ENCODE measurements at regions of chr19 and their contacts with region 1.

Region 1: GRCh38 chr19:4065430-4066175 is 1.1 kb downstream of the ZBTB7A start:
- DNase-seq: peak; percentile 97 to 99
- ATAC-seq: peak; percentile 78 to 85 (median 83)
- H3K4me3 ChIP-seq: peak overlapping the region; percentile 87
- H3K27ac ChIP-seq: peak overlapping the region; percentile 96
- H3K4me1 ChIP-seq: peaks cover 36% of the 10 kb centered on the region
- H3K27me3 ChIP-seq: no peaks in the 10 kb centered on the region
- CTCF ChIP-seq: no peak

Region 2: GRCh38 chr19:4007021-4007835 is 58.4 kb before region 1 on chr19 and contains the start of gene PIAS4:
- intact Hi-C with region 1: loop called in 1 of 2 experiments (anchors 5 kb)
- DNase-seq: peak; percentile 97 to 98
- ATAC-seq: peak; percentile 89 to 95 (median 92)
- H3K4me3 ChIP-seq: peak within 1 kb of the TSS; percentile 87
- H3K27ac ChIP-seq: peak within 1 kb of the TSS; percentile 91
- H3K4me1 ChIP-seq: peaks cover 34% of the 10 kb centered on the region
- H3K27me3 ChIP-seq: no peaks in the 10 kb centered on the region
- CTCF ChIP-seq: no peak
- total RNA-seq, gene PIAS4: 14.6 to 27.2 (median 17.0) TPM

Region 3: DNA sequence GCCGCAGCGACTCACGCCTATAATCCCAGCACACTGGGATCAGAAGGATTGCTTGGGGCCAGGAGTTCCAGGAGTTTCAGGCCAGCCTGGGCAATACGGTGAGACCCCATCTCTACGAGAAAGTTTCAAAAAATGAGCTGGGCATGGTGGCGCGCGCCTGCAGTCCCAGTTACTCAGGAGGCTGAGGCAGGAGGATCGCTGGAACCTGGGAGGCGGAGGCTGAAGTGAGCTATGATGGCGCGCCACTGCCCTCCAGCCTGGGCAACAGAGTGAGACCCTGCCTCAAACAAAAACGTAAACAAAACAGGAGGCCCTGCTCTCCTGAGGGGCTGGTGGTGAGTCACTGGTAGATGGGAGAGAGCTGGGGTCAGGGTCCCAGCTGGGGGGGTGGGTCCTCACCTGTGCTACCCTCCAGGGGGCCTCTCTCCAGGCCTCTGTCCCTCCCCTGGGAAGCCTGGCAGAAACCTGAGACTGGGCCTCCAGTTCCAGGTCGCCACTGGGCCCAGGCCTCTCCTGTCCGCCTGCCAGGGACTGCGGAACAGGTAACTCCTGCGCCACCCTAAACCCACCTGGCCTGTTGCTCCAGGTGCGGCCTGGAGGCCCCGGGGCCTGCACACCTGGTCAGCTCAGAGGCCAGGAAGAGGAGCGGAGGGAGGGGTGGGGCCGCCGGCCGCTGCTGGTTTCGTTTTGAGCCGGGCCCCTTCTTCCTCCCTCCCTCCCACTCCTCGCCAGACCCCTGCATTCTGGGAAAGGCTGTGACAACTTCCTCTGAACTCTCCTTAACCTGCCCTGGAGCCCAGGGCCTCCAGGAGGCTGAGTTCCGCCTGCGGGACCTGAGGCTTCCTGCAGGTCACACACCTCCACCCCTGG is 18.3 kb after region 1 on chr19:
- intact Hi-C with region 1: no loop called
- DNase-seq: peak; percentile 21 to 56
- ATAC-seq: peak in 2 of 4 donors; percentile 7 to 13
- H3K4me3 ChIP-seq: peak overlapping the region; percentile 38
- H3K27ac ChIP-seq: no peak overlapping the region
- H3K4me1 ChIP-seq: no peaks in the 10 kb centered on the region
- H3K27me3 ChIP-seq: no peaks in the 10 kb centered on the region
- CTCF ChIP-seq: no peak

Region 4: DNA sequence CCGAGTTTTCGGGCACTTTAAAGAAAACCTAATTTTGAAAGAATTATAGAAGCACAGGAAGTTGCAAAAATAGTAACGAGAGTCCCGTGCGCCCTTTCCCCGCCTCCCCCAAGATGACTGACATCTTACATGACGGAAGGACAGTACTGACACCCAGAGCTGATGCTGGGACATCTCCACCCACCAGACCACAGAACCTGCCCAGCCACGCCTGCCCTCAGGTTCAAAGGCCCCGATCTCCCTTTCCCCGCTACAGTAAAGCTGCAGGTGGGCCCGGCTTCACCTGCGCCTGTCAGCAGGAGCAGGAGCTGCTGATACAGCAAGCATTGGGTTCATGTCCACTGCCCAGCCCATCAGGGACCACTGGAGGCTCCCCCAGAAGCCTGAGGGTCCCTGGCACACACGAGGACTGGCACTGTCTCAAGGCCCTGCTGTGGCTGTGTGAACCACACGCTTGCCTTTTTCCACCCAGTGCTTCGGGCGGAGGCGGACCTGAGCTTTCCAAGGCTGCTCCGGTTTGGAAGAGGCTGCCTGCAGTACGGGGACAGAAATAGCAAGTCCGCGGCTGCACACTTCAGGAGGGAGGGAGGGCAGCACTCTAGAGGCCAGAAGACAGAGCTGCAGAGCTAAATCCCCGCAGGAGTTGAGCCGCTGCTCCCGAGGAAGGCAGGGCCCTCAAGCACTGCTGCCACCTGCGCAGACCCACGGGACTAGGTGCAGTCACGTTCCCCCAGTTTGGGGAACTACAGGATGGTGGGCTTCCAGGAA is 49.6 kb after region 1 on chr19:
- intact Hi-C with region 1: loop called (anchors 5 kb)
- DNase-seq: no peak
- ATAC-seq: peak; percentile 51 to 87 (median 80)
- H3K4me3 ChIP-seq: peak overlapping the region; percentile 1
- H3K27ac ChIP-seq: peak overlapping the region; percentile 55
- H3K4me1 ChIP-seq: peaks cover 10% of the 10 kb centered on the region
- H3K27me3 ChIP-seq: no peaks in the 10 kb centered on the region
- CTCF ChIP-seq: no peak

Region 5: DNA sequence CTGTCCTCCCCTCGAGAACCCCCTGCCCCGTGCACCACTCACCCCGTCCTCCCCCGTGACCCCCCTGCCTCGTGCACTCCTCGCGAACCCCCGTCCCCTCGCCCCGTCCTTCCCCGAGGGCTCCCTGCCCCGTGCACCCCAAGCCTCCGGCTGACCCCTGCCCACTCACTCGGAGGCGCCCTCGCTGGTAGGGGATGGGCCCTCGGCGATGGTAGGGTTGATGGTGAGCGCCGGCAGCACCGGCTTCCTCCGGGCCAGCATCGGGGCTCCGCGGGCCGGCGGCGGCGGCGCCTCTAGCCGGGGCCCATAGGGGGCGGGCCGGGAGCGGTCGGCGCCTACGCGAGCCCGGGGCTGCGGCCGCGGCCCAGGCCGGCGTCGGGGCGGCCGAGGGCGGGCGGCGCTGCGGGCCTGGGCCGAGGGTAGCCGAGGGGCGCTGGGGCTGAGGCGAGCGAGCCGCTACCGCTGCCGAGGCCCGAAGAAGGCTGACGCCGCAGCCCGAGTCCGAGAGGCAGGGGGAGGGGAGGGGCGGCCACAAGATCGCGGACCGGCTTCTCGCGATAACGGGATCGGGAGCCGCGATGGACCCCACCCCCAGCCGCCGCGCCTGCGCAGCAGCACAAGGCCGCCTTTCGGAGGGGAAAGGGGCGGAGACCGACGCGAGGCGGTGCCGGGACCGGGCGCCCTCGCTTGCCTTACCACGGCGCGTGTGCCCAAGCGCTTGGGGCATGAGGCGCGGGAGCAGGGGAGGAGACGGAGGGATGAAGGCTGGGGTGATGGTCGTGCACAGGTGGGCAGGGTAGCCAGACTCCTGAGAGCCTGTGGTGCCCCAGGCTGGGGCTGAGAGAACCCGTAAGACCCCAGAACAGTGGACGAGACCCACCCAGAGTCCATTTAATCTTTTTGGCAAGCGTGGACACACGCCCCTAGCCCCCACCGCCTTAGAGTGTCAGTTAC is 58.3 kb after region 1 on chr19 and contains the start of gene MAP2K2:
- intact Hi-C with region 1: loop called in 1 of 2 experiments (anchors 5 kb)
- DNase-seq: peak; percentile 96 to 98
- ATAC-seq: peak; percentile 97 to 100 (median 98)
- H3K4me3 ChIP-seq: peak within 1 kb of the TSS; percentile 67
- H3K27ac ChIP-seq: peak within 1 kb of the TSS; percentile 81
- H3K4me1 ChIP-seq: peaks cover 11% of the 10 kb centered on the region
- H3K27me3 ChIP-seq: no peaks in the 10 kb centered on the region
- CTCF ChIP-seq: no peak
- total RNA-seq, gene MAP2K2: 136 to 192 (median 151) TPM

Region 6: DNA sequence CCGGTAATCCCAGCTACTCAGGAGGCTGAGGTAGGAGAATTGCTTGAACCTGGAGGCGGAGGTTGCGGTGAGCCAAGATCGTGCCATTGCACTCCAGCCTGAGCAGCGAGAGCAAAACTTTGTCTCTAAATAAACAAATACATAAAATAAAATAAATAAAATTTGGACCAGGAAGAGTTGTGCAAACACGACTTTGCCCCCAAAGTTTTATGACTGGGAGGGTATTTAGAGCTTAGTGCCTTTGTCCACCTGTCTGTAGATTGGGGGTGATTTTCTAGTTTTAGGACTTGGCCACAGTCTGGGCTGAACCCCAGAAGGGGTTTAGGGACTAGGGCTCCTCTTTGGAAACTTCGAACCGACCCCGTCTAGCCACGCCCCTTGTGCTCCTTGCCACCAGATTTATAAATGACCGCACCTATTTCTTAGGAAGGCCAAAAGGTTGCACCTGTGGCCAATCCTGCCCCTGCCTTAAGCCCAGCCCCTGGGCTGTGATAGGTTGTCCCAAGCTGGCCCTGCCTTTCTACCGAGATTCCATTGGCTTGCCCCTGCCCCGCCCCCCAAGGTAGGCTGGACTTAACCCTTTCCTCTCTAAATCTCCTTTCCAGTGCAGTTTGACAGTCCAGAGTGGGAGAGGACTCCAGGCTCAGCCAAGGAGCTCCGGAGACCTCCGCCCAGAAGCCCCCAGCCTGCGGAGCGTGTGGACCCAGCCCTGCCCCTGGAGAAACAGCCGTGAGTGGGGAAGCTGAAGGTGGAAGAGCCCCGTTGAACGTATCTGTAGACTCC is 218.8 kb after region 1 on chr19:
- intact Hi-C with region 1: no loop called
- DNase-seq: no peak
- ATAC-seq: no peak
- H3K4me3 ChIP-seq: no peak overlapping the region
- H3K27ac ChIP-seq: no peak overlapping the region
- H3K4me1 ChIP-seq: peaks cover 2% of the 10 kb centered on the region
- H3K27me3 ChIP-seq: peaks cover 0 to 52% (median 12%) of the 10 kb centered on the region in 3 donors
- CTCF ChIP-seq: no peak

Region 7: GRCh38 chr19:4295972-4296771 is 230.6 kb after region 1 on chr19:
- intact Hi-C with region 1: no loop called
- DNase-seq: no peak
- ATAC-seq: no peak
- H3K4me3 ChIP-seq: no peak overlapping the region
- H3K27ac ChIP-seq: no peak overlapping the region
- H3K4me1 ChIP-seq: no peaks in the 10 kb centered on the region
- H3K27me3 ChIP-seq: peaks cover 0 to 16% (median 7%) of the 10 kb centered on the region in 3 donors
- CTCF ChIP-seq: no peak